ENCODE measurements at regions of chr5 and their contacts with region 1.

Region 1: DNA sequence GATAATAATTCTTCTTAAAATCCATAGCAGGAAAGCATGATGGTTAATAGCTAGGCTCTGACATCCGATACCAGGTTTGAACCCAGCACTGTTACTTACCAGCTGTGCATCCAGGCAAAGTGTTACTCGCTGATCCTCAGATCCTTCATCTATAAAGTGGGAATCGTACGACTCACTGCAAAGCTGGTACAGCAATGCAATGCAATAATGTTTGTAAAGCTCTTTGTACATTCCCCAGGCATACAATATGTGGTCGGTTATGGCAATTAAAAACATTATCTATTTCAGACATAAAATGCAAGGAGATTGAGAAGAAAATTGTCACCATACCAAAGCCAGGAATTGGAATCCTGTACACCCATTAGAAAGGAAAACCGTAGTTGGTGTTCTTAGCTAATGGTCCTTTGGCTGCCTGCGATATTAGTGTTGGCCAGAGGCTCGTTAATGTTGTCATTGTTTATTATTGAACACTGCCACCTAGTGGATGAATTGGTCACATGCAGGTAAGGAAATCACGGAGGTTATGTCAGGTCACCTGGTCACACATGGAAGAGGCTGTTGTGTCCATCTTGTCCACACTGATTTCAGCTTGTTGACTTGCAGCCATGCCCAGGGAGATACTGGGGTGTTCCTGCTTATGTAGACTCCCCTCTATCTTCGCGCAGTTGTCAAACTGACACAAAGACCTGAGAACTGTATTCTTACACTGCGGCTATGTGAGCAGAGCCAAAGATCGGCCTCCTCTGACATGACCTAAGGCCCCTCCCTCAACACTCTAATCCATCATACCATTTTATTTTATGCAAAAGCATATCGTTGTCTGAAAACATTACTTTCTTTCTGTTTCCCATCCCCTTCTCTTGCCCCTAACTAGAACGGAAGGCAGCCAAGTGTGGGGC is 87.5 kb upstream of the PPP2R2B start:
- DNase-seq: peak; percentile 61
- ATAC-seq: peak; percentile 97
- H3K4me3 ChIP-seq: no peak overlapping the region
- H3K27ac ChIP-seq: no peak overlapping the region
- H3K4me1 ChIP-seq: no peaks in the 10 kb centered on the region
- H3K27me3 ChIP-seq: no peaks in the 10 kb centered on the region
- CTCF ChIP-seq: peak; percentile 81

Region 2: DNA sequence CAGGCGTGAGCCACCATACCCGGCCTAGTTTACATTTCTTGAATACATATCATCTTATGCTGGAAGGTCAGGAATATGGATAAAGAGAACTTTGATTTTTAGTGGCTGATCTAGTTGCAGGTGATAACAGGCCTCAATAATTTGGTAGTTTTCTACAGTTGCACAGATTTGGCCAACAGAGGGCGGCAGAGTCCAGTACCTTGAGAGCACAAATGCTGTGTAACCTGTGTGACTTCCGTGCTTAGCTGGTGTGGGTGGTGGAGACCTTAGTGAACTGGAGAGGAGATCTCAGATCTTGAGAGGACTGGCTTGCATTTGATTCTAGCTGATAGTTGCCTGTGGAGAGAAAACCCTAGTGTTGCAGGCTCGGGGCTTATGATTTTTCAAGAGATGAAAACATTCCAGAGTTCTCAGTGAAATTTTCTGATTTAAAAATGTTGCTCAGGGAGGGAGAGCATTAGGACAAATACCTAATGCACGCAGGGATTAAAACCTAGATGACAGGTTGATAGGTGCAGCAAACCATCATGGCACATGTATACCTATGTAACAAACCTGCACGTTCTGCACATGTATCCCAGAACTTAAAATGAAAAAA is 432.7 kb before region 1 on chr5:
- CTCF ChIA-PET with region 1: interaction called, 10 read pairs
- POLR2A ChIA-PET with region 1: no interaction called
- in situ Hi-C with region 1: no loop called
- intact Hi-C with region 1: loop called (anchors 2 kb)
- DNase-seq: peak; percentile 52
- ATAC-seq: peak; percentile 93
- H3K4me3 ChIP-seq: no peak overlapping the region
- H3K27ac ChIP-seq: no peak overlapping the region
- H3K4me1 ChIP-seq: no peaks in the 10 kb centered on the region
- H3K27me3 ChIP-seq: no peaks in the 10 kb centered on the region
- CTCF ChIP-seq: peak; percentile 93

Region 3: DNA sequence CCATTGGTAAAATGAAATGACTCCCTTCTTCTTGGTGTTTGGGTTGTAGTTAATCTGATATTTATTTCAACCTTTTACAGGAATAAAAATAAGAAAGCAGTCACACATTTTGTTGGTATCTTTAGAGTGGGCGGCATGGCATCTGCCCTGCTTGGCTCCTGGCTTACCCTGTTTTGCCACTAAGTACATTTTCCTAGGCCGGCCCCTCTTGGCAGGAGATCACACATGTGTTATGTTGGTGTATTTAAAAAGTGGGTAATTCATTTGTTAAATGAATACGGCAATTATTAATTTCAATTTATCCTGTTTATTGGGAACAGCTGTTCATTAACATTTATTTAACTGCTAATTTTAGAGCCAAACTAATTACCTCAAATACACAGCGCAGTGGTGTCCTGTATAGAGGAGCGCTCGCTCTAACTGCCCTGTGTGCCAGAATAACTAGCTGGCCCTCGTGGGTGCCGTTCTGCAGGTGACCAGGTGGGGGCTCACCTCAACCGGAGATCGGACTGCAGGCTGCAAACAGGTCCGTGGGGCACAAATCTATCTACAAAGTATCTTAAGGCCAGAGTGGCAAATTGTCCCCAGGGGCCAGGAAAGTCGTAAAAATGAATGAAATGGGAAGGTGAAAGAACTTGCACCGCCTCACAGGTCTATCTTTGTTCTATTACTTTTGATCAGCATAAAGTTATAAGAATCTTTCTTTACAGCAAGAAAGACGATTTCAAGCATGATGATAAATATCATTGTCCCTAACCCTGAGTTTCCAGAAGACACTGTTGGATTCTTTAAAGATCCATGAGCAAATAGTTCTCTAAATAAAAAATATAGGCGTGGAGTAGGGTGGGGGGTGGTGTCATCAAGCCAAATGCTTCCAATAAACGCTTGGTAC is 423.8 kb before region 1 on chr5:
- CTCF ChIA-PET with region 1: interaction called, 13 read pairs
- POLR2A ChIA-PET with region 1: no interaction called
- in situ Hi-C with region 1: no loop called
- intact Hi-C with region 1: loop called (anchors 1 kb)
- DNase-seq: peak; percentile 41
- ATAC-seq: peak; percentile 97
- H3K4me3 ChIP-seq: no peak overlapping the region
- H3K27ac ChIP-seq: no peak overlapping the region
- H3K4me1 ChIP-seq: no peaks in the 10 kb centered on the region
- H3K27me3 ChIP-seq: no peaks in the 10 kb centered on the region
- CTCF ChIP-seq: peak; percentile 96

Region 4: GRCh38 chr5:146662229-146662628 is 303.8 kb before region 1 on chr5:
- CTCF ChIA-PET with region 1: no interaction called
- POLR2A ChIA-PET with region 1: no interaction called
- in situ Hi-C with region 1: no loop called
- intact Hi-C with region 1: loop called (anchors 5 kb)
- DNase-seq: no peak
- ATAC-seq: no peak
- H3K4me3 ChIP-seq: no peak overlapping the region
- H3K27ac ChIP-seq: no peak overlapping the region
- H3K4me1 ChIP-seq: no peaks in the 10 kb centered on the region
- H3K27me3 ChIP-seq: no peaks in the 10 kb centered on the region
- CTCF ChIP-seq: peak; percentile 58

Region 5: DNA sequence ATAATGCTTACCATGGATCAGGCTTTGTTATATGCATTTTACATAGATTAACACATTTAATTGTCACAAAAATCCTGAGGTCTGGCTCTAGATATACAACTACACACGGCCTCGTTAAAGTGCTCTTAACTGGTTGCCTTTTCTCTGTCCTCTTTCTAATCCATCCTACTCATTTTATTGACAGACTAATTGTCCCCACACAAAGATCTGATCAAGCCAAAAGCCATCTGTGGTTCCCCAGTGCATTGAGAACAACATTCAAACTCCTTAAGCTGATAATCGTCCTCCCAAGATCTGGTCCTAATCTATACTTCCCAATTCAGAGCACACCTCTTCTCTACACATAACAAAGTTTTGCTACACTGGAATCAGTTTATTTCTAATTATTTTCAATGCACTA is 63.5 kb before region 1 on chr5:
- CTCF ChIA-PET with region 1: no interaction called
- POLR2A ChIA-PET with region 1: no interaction called
- in situ Hi-C with region 1: no loop called
- intact Hi-C with region 1: no loop called
- DNase-seq: no peak
- ATAC-seq: no peak
- H3K4me3 ChIP-seq: no peak overlapping the region
- H3K27ac ChIP-seq: no peak overlapping the region
- H3K4me1 ChIP-seq: no peaks in the 10 kb centered on the region
- H3K27me3 ChIP-seq: no peaks in the 10 kb centered on the region
- CTCF ChIP-seq: no peak

Region 6: GRCh38 chr5:147188200-147189108 is 222.4 kb after region 1 on chr5:
- CTCF ChIA-PET with region 1: interaction called, 9 read pairs
- POLR2A ChIA-PET with region 1: no interaction called
- in situ Hi-C with region 1: no loop called
- intact Hi-C with region 1: loop called (anchors 2 kb)
- DNase-seq: peak; percentile 51
- ATAC-seq: peak; percentile 94
- H3K4me3 ChIP-seq: peak overlapping the region; percentile 11 to 55; a peak in 3 of 4 replicates
- H3K27ac ChIP-seq: no peak overlapping the region
- H3K4me1 ChIP-seq: no peaks in the 10 kb centered on the region
- H3K27me3 ChIP-seq: no peaks in the 10 kb centered on the region; the same call in 1 of the 2 replicates
- CTCF ChIP-seq: peak; percentile 79

Measured in Panc1 (cell line).